Dendritic cell treated with granulocyte-macrophage colony-stimulating factor and Interleukin-4, amounts not matched to agents 40 ng/mL and 50 ng/mL, for 4 days (primary cell): ENCODE measurements at regions of chr12 and their contacts with region 1.

Region 1: GRCh38 chr12:51814311-51815088 is 34.0 kb downstream of the FIGNL2 start:
- H3K4me3 Mint-ChIP-seq: peak overlapping the region; percentile 61
- H3K27ac Mint-ChIP-seq: peak overlapping the region; percentile 31
- H3K4me1 Mint-ChIP-seq: peaks cover 35% of the 10 kb centered on the region
- H3K27me3 Mint-ChIP-seq: peaks cover 40% of the 10 kb centered on the region

Region 2: GRCh38 chr12:51695241-51696010 is 119.1 kb before region 1 on chr12:
- intact Hi-C with region 1: loop called (anchors 10 kb)
- H3K4me3 Mint-ChIP-seq: no peak overlapping the region
- H3K27ac Mint-ChIP-seq: no peak overlapping the region
- H3K4me1 Mint-ChIP-seq: peaks cover 5% of the 10 kb centered on the region
- H3K27me3 Mint-ChIP-seq: no peaks in the 10 kb centered on the region

Region 3: DNA sequence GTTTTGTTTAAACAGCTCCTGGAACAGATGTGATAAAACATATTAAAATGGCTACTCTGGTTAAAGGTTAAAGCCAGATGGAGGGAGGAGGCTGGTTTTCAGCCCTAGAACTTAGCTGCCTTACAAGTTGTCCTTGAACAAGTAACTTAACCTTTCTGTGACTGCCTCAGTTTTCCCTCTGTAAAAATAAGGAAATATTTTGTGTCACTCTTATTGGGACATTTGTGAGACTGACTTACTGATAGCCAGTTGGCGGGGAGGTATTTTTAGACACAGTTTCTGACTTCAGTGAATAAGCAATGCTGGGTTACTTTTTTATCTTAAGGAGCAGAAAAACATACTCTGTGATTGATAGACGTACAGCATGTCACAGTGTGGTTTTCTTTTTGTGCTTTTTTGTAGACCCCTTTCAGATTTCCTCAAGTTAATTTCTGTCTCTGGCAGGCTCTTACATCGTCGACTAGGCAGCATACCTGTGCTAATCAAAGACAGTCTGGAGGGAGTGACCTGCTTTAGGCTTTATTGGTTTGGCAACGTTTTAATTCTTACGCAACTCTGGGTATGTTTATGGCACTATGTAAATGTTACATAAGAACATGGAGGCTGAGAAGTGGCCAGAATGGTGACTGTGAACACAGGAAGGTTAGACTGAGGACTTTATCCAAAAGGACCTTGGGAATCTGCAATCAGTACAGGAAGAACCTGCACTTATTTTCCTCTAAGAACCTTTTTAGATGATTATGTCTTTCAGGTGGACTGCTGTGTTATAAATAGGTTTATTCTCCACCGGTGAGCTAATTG is 140.3 kb after region 1 on chr12:
- intact Hi-C with region 1: no loop called
- H3K4me3 Mint-ChIP-seq: no peak overlapping the region
- H3K27ac Mint-ChIP-seq: no peak overlapping the region
- H3K4me1 Mint-ChIP-seq: peaks cover 64% of the 10 kb centered on the region
- H3K27me3 Mint-ChIP-seq: peaks cover 5% of the 10 kb centered on the region

Region 4: GRCh38 chr12:52534487-52534886 is 720.0 kb after region 1 on chr12:
- intact Hi-C with region 1: no loop called
- H3K4me3 Mint-ChIP-seq: no peak overlapping the region
- H3K27ac Mint-ChIP-seq: no peak overlapping the region
- H3K4me1 Mint-ChIP-seq: peaks cover 22% of the 10 kb centered on the region
- H3K27me3 Mint-ChIP-seq: peaks cover 22% of the 10 kb centered on the region